Activated T-helper 1 cell treated with anti-CD3 and anti-CD28 coated beads, Interleukin-12 subunit alpha, Interleukin-12 subunit beta, Interleukin-2, Interleukin-4 antibody, amounts not matched to agents 30 ng/mL and 10 ng/mL and 1 ng/mL, durations not matched to agents 14 hours and 24 hours and 36 hours (primary cell): ENCODE measurements at regions of chr6 and their contacts with region 1.

Region 1: GRCh38 chr6:37169496-37170272 is at the start of gene PIM1:
- DNase-seq: peak; percentile 92
- H3K4me3 Mint-ChIP-seq: peak within 1 kb of the TSS; percentile 93
- H3K27ac Mint-ChIP-seq: peak within 1 kb of the TSS; percentile 98
- H3K4me1 Mint-ChIP-seq: peaks cover 42% of the 10 kb centered on the region
- H3K27me3 Mint-ChIP-seq: peaks cover 2% of the 10 kb centered on the region
- total RNA-seq, gene PIM1: 182 and 192 TPM in 2 replicates

Region 2: GRCh38 chr6:36885461-36886401 is 284.0 kb before region 1 on chr6 and contains the start of gene C6orf89:
- intact Hi-C with region 1: loop called (anchors 1 kb)
- DNase-seq: peak; percentile 94
- H3K4me3 Mint-ChIP-seq: peak within 1 kb of the TSS; percentile 91
- H3K27ac Mint-ChIP-seq: peak within 1 kb of the TSS; percentile 82
- H3K4me1 Mint-ChIP-seq: peaks cover 37% of the 10 kb centered on the region
- H3K27me3 Mint-ChIP-seq: no peaks in the 10 kb centered on the region
- total RNA-seq, gene C6orf89: 31.5 and 31.8 TPM in 2 replicates

Region 3: GRCh38 chr6:37029249-37029971 is 140.3 kb before region 1 on chr6:
- intact Hi-C with region 1: loop called (anchors 1 kb)
- DNase-seq: no peak
- H3K4me3 Mint-ChIP-seq: no peak overlapping the region
- H3K27ac Mint-ChIP-seq: peak overlapping the region; percentile 79
- H3K4me1 Mint-ChIP-seq: peaks cover 63% of the 10 kb centered on the region
- H3K27me3 Mint-ChIP-seq: no peaks in the 10 kb centered on the region

Region 4: GRCh38 chr6:37095997-37096396 is 73.7 kb before region 1 on chr6:
- intact Hi-C with region 1: no loop called
- DNase-seq: no peak
- H3K4me3 Mint-ChIP-seq: no peak overlapping the region
- H3K27ac Mint-ChIP-seq: no peak overlapping the region
- H3K4me1 Mint-ChIP-seq: peaks cover 21% of the 10 kb centered on the region
- H3K27me3 Mint-ChIP-seq: no peaks in the 10 kb centered on the region

Region 5: DNA sequence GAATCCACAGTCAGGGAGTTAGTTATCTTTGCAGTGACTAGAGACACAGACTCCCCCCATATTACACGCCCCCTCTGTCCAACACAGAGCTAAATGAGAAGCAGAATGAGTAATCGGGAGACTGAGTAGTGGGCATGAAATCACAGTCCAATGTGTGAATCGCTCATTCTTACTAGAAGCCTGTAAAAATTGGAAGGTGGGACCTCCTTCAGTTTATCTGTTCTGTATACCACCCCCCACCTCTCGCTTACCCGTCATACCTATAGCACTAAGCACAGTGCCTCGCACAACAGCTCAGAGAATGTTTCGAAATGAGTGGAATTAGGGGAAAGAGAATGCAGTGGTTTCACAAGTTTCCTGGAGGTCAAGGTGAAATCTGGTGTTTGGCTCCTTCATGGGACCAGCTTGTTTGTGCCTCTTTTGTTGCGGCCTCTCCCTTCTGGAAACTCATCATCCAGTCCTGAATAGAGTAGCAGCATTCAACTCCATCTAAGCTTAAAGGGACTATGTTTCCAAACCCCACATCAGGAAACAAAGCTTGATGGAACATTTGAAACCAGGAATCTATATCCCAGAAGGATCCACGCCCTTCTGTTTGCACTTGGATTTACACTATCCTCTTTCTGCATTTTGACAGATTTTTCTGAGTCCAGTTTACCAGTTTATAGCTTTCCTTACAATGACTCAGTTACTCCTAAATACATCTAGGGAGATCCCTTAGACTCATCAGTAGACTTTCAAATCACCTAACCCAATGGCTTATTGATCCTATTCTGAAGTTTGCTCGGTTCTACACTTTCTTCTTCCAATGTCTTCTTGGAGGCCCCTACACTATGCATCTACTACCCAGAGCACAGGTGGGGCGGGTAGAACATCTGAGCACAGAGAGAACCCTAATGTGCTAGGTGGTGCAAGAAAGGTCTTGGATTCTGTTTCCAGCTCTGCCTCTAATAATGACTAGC is 58.9 kb before region 1 on chr6:
- intact Hi-C with region 1: loop called (anchors 1 kb)
- DNase-seq: peak; percentile 34
- H3K4me3 Mint-ChIP-seq: peak overlapping the region; percentile 48
- H3K27ac Mint-ChIP-seq: peak overlapping the region; percentile 82
- H3K4me1 Mint-ChIP-seq: peaks cover 38% of the 10 kb centered on the region
- H3K27me3 Mint-ChIP-seq: no peaks in the 10 kb centered on the region

Region 6: DNA sequence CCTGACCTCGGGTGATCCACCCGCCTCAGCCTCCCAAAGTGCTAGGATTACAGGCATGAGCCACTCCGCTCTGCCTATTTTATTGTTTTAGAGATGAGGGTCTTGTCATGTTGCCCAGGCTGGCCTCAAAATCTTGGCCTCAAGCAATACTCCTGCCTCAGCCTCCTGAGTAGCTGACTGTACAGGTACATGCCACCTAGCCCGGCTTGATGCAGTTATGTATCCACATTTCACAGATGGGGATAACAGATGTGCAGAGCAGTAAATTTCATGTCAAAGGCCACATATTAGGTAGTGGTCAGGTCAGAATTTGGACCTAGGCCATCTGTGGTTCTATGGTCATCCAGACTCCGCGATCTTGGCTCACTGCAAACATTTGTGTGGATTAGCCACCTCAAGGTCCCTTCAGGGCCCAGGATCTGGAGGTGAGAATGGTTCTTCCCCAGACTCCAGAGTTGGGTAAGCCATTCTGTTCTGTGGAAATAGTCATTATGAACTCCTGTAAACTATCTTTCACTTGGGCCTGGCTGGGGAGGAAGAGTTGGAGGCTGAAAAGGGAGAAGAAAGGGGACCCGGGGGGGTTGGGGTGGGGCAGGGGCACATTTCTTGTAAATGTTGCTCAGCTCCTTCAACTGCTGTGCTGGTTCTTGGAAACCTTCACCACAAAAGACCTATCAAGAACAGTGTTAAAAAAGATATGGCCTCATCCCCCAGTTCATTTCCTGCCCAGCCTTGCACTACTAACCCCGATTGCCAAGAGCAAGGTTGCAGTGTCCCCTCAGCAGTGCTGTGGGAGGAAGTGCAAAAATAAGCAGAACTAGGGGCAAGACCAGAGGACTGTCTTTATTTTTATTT is 13.3 kb after region 1 on chr6:
- intact Hi-C with region 1: loop called (anchors 1 kb)
- DNase-seq: peak; percentile 71
- H3K4me3 Mint-ChIP-seq: peak overlapping the region; percentile 75
- H3K27ac Mint-ChIP-seq: peak overlapping the region; percentile 98
- H3K4me1 Mint-ChIP-seq: peaks cover 54% of the 10 kb centered on the region
- H3K27me3 Mint-ChIP-seq: no peaks in the 10 kb centered on the region

Region 7: DNA sequence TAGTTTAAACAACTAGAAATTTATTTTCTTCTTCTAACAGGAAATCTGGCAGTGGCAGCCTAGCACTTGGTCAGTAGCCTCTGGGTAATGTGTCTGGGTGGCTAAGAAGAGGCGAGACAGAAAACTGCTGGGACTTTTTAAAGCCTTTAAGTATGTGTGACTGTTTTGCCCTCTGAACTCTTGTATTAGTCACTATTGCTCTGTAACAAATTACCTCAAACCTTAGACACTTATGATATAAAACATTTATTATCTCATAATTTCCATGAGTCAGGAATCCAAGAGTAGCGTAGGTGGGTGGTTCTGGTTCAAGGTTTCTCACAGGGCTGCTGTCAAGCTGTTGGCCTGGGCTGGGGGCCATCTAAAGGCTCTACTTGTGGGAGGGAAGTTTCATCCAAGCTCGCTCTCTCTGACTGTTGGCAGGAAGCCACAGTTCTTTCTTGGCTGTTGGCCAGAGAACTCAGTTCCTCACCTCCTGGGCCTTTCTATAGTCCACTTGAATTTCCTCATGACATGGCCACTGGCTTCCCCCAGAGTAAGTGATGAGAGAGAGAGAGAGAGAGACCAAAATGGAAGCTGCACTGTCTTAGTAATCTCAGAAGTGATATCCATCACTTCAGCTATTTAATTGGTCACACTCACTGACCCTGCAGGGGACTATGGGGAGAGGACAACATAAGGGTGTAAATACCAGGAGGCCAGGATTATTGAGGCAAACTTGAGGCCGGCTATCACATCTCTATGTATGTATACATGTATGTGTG is 70.4 kb after region 1 on chr6:
- intact Hi-C with region 1: loop called (anchors 1 kb)
- DNase-seq: peak; percentile 49
- H3K4me3 Mint-ChIP-seq: peak overlapping the region; percentile 38
- H3K27ac Mint-ChIP-seq: peak overlapping the region; percentile 90
- H3K4me1 Mint-ChIP-seq: peaks cover 64% of the 10 kb centered on the region
- H3K27me3 Mint-ChIP-seq: no peaks in the 10 kb centered on the region